IMR-90 (cell line): ENCODE measurements at regions of chr3 and their contacts with region 1.

Region 1: GRCh38 chr3:170603770-170604510 is 18.1 kb upstream of the SLC7A14 start:
- DNase-seq: peak; percentile 42
- ATAC-seq: peak; percentile 59; the same call in 1 of the 2 replicates
- H3K4me3 ChIP-seq: no peak overlapping the region
- H3K27ac ChIP-seq: no peak overlapping the region
- H3K4me1 ChIP-seq: 0 out of 2 replicates have a peak, but pooled peaks cover 2% of the 10 kb centered on the region
- H3K27me3 ChIP-seq: no peaks in the 10 kb centered on the region
- CTCF ChIP-seq: no peak
- POLR2A ChIP-seq: no peak
- RAD21 ChIP-seq: no peak

Region 2: GRCh38 chr3:170290194-170290593 is 313.7 kb before region 1 on chr3:
- CTCF ChIA-PET with region 1: no interaction called
- POLR2A ChIA-PET with region 1: no interaction called
- dilution Hi-C with region 1: no loop called
- in situ Hi-C with region 1: no loop called
- intact Hi-C with region 1: no loop called
- DNase-seq: no peak
- ATAC-seq: no peak
- H3K4me3 ChIP-seq: no peak overlapping the region
- H3K27ac ChIP-seq: no peak overlapping the region
- H3K4me1 ChIP-seq: no peaks in the 10 kb centered on the region
- H3K27me3 ChIP-seq: no peaks in the 10 kb centered on the region
- CTCF ChIP-seq: no peak
- POLR2A ChIP-seq: no peak
- RAD21 ChIP-seq: no peak

Region 3: DNA sequence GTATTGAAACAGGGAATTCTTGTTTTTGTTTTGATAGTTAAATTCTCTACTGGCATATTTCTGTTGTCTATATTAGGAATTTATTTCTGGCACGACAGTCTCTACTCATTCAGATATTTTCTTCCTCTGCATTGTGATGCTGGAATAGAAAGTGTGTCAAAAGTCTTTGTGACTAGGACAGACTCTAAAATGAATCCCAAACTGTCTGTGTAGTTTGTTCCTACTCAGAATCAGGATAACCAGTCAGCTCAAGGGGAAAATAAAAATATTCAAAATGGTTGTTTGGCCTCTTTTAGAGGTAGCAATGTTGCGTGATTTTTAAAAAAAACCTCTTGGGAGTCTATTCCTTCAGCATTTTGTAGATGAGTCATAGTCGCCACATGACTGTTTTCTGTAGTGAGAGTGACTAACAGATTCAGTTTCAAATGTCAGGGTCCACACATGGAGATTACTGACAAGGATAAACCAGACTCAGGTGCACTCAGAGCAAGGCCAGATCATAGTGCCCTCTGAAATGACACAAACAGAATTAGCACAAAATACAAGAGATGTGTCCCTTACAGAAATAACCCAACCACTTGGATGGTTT is 31.2 kb before region 1 on chr3:
- CTCF ChIA-PET with region 1: no interaction called
- POLR2A ChIA-PET with region 1: no interaction called
- dilution Hi-C with region 1: no loop called
- in situ Hi-C with region 1: no loop called
- intact Hi-C with region 1: loop called (anchors 5 kb)
- DNase-seq: peak; percentile 93
- ATAC-seq: peak; percentile 90
- H3K4me3 ChIP-seq: no peak overlapping the region
- H3K27ac ChIP-seq: peak overlapping the region; percentile 32; the same call in 1 of the 2 replicates
- H3K4me1 ChIP-seq: no peaks in the 10 kb centered on the region
- H3K27me3 ChIP-seq: no peaks in the 10 kb centered on the region
- CTCF ChIP-seq: no peak
- POLR2A ChIP-seq: no peak
- RAD21 ChIP-seq: no peak

Region 4: DNA sequence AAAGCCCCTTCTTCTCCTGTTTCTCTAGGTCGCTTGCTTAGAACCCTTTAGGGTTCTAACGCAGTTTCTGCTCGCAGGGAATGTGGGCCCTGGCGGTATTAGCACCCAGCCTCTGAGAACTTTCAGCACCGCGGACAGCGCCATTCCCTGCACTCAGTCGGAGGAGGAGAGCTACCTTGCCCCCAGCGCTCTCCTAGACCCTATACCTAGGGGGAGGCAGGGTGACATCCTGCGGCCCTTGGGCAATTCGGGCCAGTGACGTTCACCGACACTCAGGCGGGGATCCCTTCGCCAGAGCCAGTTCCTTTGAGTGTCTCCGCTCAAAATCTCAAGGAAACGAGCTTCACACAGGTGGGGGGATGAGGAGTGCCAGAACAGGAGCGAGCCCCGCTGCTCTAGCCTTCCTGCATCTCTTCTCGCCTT is 19.3 kb before region 1 on chr3:
- CTCF ChIA-PET with region 1: no interaction called
- POLR2A ChIA-PET with region 1: no interaction called
- dilution Hi-C with region 1: no loop called
- in situ Hi-C with region 1: no loop called
- intact Hi-C with region 1: loop called (anchors 2 kb)
- DNase-seq: peak; percentile 68
- ATAC-seq: peak; percentile 85
- H3K4me3 ChIP-seq: no peak overlapping the region; the same call in 1 of the 2 replicates
- H3K27ac ChIP-seq: no peak overlapping the region
- H3K4me1 ChIP-seq: no peaks in the 10 kb centered on the region
- H3K27me3 ChIP-seq: peaks cover 35% of the 10 kb centered on the region
- CTCF ChIP-seq: no peak
- POLR2A ChIP-seq: no peak
- RAD21 ChIP-seq: peak; percentile 28; the same call in 1 of the 2 replicates

Region 5: GRCh38 chr3:170703121-170703588 is 99.2 kb after region 1 on chr3:
- CTCF ChIA-PET with region 1: no interaction called
- POLR2A ChIA-PET with region 1: no interaction called
- dilution Hi-C with region 1: no loop called
- in situ Hi-C with region 1: no loop called
- intact Hi-C with region 1: no loop called
- DNase-seq: peak; percentile 95
- ATAC-seq: peak; percentile 94
- H3K4me3 ChIP-seq: no peak overlapping the region
- H3K27ac ChIP-seq: peak overlapping the region; percentile 64
- H3K4me1 ChIP-seq: peaks cover 11% of the 10 kb centered on the region
- H3K27me3 ChIP-seq: no peaks in the 10 kb centered on the region
- CTCF ChIP-seq: no peak
- POLR2A ChIP-seq: no peak
- RAD21 ChIP-seq: 0 out of 2 replicates have a peak, but pooled peaks have one; percentile 5